Naive thymus-derived CD4-positive, alpha-beta T cell (primary cell): ENCODE measurements at regions of chr17 and their contacts with region 1.

Region 1: DNA sequence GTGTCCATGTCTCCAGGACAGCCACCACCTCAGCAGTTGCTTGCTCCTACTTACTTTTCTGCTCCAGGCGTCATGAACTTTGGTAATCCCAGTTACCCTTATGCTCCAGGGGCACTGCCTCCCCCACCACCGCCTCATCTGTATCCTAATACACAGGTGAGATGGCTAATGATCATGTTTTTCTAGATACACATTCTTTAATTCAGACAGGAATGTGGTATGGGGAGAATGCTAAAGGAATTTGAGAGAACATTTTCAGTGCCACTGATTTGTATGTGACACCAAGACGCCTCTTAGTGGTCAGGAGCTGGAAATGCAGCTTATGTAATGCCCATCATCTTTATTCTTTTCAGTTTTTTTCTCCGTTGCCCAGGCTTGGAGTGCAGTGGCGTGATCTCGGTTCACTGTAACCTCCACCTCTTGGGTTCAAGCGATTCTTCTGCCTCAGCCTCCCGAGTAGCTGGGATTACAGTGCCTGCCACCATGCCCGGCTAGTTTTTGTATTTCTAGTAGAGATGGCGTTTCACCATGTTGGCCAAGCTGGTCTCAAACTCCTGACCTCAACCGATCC is 8.9 kb upstream of the RAPGEFL1 start:
- DNase-seq: peak in 7 of 9 donors; percentile 40 to 70 (median 62)
- ATAC-seq: peak; percentile 90
- H3K4me3 ChIP-seq: no peak overlapping the region
- H3K4me3 Mint-ChIP-seq: no peak overlapping the region
- H3K27ac ChIP-seq: peak overlapping the region; percentile 42
- H3K27ac Mint-ChIP-seq: peak overlapping the region; percentile 44 to 93 (median 81)
- H3K4me1 ChIP-seq: no peaks in the 10 kb centered on the region
- H3K4me1 Mint-ChIP-seq: peaks cover 9 to 20% (median 15%) of the 10 kb centered on the region in 7 donors
- H3K27me3 ChIP-seq: no peaks in the 10 kb centered on the region
- H3K27me3 Mint-ChIP-seq: no peaks in the 10 kb centered on the region

Region 2: DNA sequence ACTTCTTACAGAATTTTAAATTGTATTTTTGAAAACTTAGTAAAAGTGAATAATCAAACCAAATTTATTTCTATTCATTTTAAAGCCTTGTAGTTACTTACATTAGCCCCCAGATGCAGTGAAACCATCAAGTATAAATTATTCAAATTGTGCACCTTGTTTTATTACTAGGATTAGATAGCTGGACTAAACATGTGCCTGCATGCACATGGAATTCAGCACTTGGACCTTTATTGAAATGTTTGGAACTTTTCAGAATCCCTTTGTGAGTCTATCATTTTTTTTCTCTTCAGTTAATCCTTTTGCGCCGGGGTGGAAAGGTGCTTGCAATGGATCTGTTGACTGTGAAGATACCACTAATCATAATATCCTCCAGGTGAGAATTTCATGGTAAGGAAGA is 295.6 kb before region 1 on chr17:
- CTCF ChIA-PET with region 1: no interaction called
- POLR2A ChIA-PET with region 1: no interaction called
- intact Hi-C with region 1: loop called in 1 of 2 experiments (anchors 10 kb)
- DNase-seq: peak in 1 of 9 donors; percentile 25
- ATAC-seq: peak; percentile 57
- H3K4me3 ChIP-seq: no peak overlapping the region
- H3K4me3 Mint-ChIP-seq: no peak overlapping the region
- H3K27ac ChIP-seq: no peak overlapping the region
- H3K27ac Mint-ChIP-seq: no peak overlapping the region
- H3K4me1 ChIP-seq: no peaks in the 10 kb centered on the region
- H3K4me1 Mint-ChIP-seq: peaks cover 2 to 13% (median 11%) of the 10 kb centered on the region in 7 donors
- H3K27me3 ChIP-seq: no peaks in the 10 kb centered on the region
- H3K27me3 Mint-ChIP-seq: peaks cover 0 to 22% (median 0%) of the 10 kb centered on the region in 5 donors

Region 3: GRCh38 chr17:40026816-40027613 is 141.3 kb before region 1 on chr17:
- CTCF ChIA-PET with region 1: interaction called, 10 read pairs
- POLR2A ChIA-PET with region 1: no interaction called
- intact Hi-C with region 1: loop called in 1 of 2 experiments (anchors 5 kb)
- DNase-seq: peak; percentile 54 to 81 (median 69)
- ATAC-seq: peak; percentile 91
- H3K4me3 ChIP-seq: no peak overlapping the region
- H3K4me3 Mint-ChIP-seq: peak overlapping the region in 4 of 10 donors; percentile 14 to 72 (median 36)
- H3K27ac ChIP-seq: no peak overlapping the region
- H3K27ac Mint-ChIP-seq: peak overlapping the region in 2 of 9 donors; percentile 19 to 42
- H3K4me1 ChIP-seq: peaks cover 6 to 26% of the 10 kb centered on the region in 2 donors
- H3K4me1 Mint-ChIP-seq: peaks cover 10 to 24% (median 22%) of the 10 kb centered on the region in 7 donors
- H3K27me3 ChIP-seq: no peaks in the 10 kb centered on the region
- H3K27me3 Mint-ChIP-seq: no peaks in the 10 kb centered on the region

Region 4: DNA sequence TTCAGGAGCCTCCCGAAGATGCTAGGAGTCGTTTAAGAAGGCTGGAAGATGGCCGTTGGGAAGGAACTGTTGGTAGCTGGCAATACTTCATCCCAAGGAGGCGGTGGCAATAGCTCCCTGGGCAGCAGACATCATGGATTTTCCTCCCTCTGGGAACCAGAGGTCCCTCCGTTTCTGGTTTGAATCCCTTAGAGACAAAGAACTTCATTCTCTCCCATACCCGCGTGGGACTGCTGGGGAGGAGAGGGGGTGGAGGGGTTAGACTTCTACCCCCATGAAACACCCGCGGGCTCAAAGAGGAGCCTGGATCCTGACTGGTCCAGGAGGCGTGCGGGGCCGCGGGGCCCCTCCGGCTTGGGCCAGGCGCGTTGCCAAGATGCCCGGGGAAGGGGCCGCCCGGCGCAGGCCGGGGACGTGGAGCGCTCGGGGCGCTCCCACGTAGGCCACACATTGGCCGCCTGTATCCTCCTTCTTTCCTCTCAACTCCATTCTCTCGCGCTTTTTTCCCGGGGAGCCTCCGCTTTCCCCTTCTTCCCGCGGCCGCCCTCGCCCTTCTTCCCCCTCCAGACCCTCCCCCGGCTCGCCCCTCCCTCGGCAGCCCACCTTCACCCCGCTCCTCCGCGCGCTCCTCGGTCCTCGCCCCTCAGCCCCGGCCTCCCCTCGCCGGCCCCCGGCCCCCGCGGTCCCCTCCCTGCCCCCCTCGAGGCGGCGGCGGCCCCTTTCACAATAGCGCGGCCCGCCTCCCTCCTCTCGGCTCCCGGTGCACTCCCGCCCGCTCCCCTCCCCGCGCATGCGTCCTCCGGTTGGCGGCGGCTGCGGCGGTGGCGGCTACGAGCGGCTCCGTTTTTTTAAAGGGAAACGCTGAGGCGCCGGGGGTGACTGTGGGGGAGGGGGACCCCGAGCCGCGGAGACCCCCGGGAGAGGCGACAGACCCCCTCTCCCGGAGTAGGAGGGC is 46.9 kb before region 1 on chr17 and contains the start of gene MSL1:
- CTCF ChIA-PET with region 1: interaction called, 8 read pairs
- POLR2A ChIA-PET with region 1: interaction called, 10 read pairs
- intact Hi-C with region 1: loop called in 1 of 2 experiments (anchors 2 kb)
- DNase-seq: peak; percentile 81 to 95 (median 86)
- ATAC-seq: peak; percentile 82
- H3K4me3 ChIP-seq: peak within 1 kb of the TSS; percentile 86
- H3K4me3 Mint-ChIP-seq: peak within 1 kb of the TSS; percentile 65 to 99 (median 86)
- H3K27ac ChIP-seq: peak within 1 kb of the TSS; percentile 82
- H3K27ac Mint-ChIP-seq: peak within 1 kb of the TSS; percentile 38 to 97 (median 84)
- H3K4me1 ChIP-seq: peaks cover 12 to 16% of the 10 kb centered on the region in 2 donors
- H3K4me1 Mint-ChIP-seq: peaks cover 32 to 47% (median 38%) of the 10 kb centered on the region in 7 donors
- H3K27me3 ChIP-seq: no peaks in the 10 kb centered on the region
- H3K27me3 Mint-ChIP-seq: no peaks in the 10 kb centered on the region
- total RNA-seq, gene MSL1: 97.0 to 145 (median 113) TPM

Region 5: DNA sequence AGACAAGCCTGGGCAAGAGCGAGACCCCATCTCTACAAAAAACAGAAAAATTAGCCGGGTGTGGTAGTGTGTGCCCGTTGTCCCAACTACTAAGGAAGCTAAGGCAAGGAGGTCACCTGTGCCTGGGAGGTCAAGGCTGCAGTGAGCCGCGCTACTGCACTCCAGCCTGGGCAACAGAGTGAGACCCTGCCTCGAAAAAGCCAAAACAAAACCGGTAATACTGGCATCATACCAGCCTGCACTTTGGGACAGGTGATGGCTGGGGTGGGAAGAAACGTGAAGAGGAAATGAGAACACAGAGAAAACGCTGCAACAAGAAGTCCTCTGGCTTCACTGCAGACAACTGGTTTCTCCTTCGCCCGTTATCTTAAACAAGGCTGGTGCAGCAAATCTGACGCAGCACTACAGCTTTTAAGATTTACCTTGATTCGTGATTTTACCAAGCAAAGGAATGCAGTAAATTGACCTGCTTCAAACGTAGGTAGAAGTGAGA is 28.7 kb before region 1 on chr17:
- CTCF ChIA-PET with region 1: interaction called, 3 read pairs
- POLR2A ChIA-PET with region 1: interaction called, 9 read pairs
- intact Hi-C with region 1: loop called in 1 of 2 experiments (anchors 2 kb)
- DNase-seq: peak in 4 of 9 donors; percentile 8 to 25 (median 10)
- ATAC-seq: peak; percentile 8
- H3K4me3 ChIP-seq: peak overlapping the region; percentile 80
- H3K4me3 Mint-ChIP-seq: peak overlapping the region; percentile 83 to 97 (median 93)
- H3K27ac ChIP-seq: peak overlapping the region; percentile 96
- H3K27ac Mint-ChIP-seq: peak overlapping the region; percentile 85 to 100 (median 98)
- H3K4me1 ChIP-seq: peaks cover 21 to 28% of the 10 kb centered on the region in 2 donors
- H3K4me1 Mint-ChIP-seq: peaks cover 14 to 62% (median 44%) of the 10 kb centered on the region in 7 donors
- H3K27me3 ChIP-seq: no peaks in the 10 kb centered on the region
- H3K27me3 Mint-ChIP-seq: peaks cover 0 to 2% (median 0%) of the 10 kb centered on the region in 5 donors

Region 6: GRCh38 chr17:40157973-40158372 is 10.4 kb before region 1 on chr17:
- CTCF ChIA-PET with region 1: interaction called, 13 read pairs
- POLR2A ChIA-PET with region 1: interaction called, 6 read pairs
- intact Hi-C with region 1: no loop called
- DNase-seq: no peak
- ATAC-seq: no peak
- H3K4me3 ChIP-seq: no peak overlapping the region
- H3K4me3 Mint-ChIP-seq: peak overlapping the region in 1 of 10 donors; percentile 11
- H3K27ac ChIP-seq: no peak overlapping the region
- H3K27ac Mint-ChIP-seq: peak overlapping the region in 7 of 9 donors; percentile 29 to 89 (median 65)
- H3K4me1 ChIP-seq: peaks cover 0 to 5% of the 10 kb centered on the region in 2 donors
- H3K4me1 Mint-ChIP-seq: peaks cover 10 to 42% (median 25%) of the 10 kb centered on the region in 7 donors
- H3K27me3 ChIP-seq: no peaks in the 10 kb centered on the region
- H3K27me3 Mint-ChIP-seq: no peaks in the 10 kb centered on the region